Activated CD4-positive, alpha-beta T cell treated with anti-CD3 and anti-CD28 coated beads for 36 hours (primary cell): ENCODE measurements at regions of chr10 and their contacts with region 1.

Region 1: DNA sequence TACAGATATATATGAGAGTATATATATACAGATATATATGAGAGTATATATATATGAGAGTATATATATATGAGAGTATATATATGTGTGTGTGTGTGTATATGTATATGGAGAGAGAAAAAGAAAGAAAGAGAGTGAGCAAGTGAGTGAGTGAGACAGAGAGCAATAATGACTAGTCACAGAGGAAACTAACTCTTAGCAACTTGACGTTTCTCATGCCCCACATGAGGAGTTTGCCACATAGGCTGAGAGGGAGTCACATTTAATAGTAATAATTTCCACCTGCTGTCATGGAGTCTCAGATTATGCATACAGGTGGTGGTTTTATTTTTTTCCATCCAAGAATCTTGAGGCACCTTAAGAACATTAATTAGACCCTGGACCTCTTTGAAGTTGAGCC is 199.9 kb downstream of the GATA3 start:
- DNase-seq: peak; percentile 57
- ATAC-seq: peak; percentile 96
- H3K4me3 Mint-ChIP-seq: no peak overlapping the region
- H3K27ac Mint-ChIP-seq: peak overlapping the region; percentile 92
- H3K4me1 Mint-ChIP-seq: peaks cover 22% of the 10 kb centered on the region
- H3K27me3 Mint-ChIP-seq: no peaks in the 10 kb centered on the region

Region 2: DNA sequence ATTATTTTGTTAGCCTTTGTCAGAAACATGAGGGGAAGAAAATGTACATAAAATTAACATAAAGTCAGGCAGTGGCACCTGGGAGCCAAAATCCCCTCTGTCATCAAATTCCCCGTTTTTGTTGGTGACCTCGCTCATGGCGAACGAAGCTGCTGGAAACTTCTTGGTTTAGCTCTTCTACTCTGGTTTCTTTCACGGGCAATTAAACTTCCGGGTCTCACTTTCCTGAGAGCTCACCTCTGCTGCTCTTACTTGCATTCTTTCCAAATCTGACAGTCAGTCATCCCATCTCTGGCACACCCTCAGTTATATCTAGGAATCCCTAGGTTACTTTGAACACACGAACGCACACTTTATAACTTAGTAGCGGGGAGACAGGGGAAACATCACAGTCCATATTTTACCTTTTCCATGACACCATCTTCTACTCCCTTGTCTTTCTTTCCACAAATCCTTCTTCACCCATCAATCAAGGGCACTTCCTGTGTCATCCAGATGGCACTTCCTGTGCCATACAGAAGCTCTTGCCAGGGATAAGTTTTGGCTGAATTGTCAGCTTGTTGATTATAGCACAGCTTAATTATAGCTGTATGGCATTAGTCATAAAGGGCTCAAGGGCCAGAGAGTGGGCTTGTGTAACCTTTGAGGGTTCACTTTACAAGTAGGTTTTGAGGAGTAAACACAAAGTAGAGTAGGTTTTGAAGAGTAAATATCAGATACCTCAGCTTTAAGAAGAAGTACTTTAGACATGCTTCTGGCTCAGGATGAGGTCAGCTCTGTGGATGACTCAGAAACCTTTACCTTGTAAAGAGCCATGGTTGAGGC is 94.8 kb before region 1 on chr10:
- CTCF ChIA-PET with region 1: no interaction called
- POLR2A ChIA-PET with region 1: no interaction called
- intact Hi-C with region 1: no loop called
- DNase-seq: peak; percentile 14
- ATAC-seq: peak; percentile 93
- H3K4me3 Mint-ChIP-seq: no peak overlapping the region
- H3K27ac Mint-ChIP-seq: peak overlapping the region; percentile 53
- H3K4me1 Mint-ChIP-seq: peaks cover 11% of the 10 kb centered on the region
- H3K27me3 Mint-ChIP-seq: peaks cover 3% of the 10 kb centered on the region

Region 3: GRCh38 chr10:8283986-8284385 is 29.6 kb after region 1 on chr10:
- CTCF ChIA-PET with region 1: no interaction called
- POLR2A ChIA-PET with region 1: no interaction called
- intact Hi-C with region 1: no loop called
- DNase-seq: no peak
- ATAC-seq: no peak
- H3K4me3 Mint-ChIP-seq: no peak overlapping the region
- H3K27ac Mint-ChIP-seq: no peak overlapping the region
- H3K4me1 Mint-ChIP-seq: peaks cover 5% of the 10 kb centered on the region
- H3K27me3 Mint-ChIP-seq: peaks cover 3% of the 10 kb centered on the region

Region 4: DNA sequence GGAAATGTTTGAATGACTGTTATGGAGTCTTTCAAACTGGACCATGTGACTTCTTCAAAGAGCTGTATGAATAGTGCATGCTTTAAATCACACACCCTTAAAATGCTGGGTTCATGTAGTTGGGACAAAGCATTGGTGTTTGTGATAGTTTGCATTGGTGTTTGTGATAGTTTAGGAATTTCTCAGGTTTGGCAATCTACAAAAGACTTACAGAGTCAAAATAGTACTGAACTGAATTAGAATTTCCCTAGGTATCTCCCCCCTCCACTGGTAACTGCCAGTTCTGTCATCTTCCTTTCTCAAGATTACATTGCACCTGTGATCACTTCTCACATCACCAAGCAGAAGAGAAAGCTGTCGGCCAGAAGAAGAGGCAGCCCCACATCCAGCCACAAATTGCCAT is 61.3 kb after region 1 on chr10:
- CTCF ChIA-PET with region 1: no interaction called
- POLR2A ChIA-PET with region 1: no interaction called
- intact Hi-C with region 1: loop called (anchors 2 kb)
- DNase-seq: peak; percentile 44
- ATAC-seq: peak; percentile 84
- H3K4me3 Mint-ChIP-seq: no peak overlapping the region
- H3K27ac Mint-ChIP-seq: peak overlapping the region; percentile 78
- H3K4me1 Mint-ChIP-seq: peaks cover 56% of the 10 kb centered on the region
- H3K27me3 Mint-ChIP-seq: peaks cover 2% of the 10 kb centered on the region

Region 5: DNA sequence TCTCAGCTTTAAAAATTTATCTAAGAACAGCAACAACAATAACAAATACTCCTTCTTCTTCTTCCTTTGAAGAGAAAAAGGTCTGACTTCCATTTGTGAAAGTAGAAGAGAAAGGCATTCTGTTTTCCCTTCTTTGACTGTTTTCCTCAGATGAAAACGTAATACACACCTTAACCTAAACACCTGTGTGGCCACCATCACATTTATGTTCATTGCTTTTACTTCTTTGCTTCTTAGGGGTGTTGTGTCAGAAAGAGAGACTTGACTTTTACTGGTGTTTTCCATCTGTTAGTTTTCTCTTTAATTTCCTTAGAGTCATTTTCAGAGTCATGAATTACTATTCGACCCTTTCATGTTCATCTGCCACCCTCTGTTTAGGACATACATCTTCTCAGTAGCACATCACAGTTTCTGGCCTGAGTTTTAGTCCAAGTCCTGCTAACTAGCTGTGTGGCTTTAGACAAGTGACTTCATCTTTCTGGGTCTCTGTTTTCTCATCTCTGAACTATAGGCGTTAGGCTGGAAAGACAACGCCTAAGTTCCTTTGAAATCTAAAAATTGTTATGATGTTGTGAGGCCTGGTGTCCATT is 83.9 kb after region 1 on chr10:
- CTCF ChIA-PET with region 1: no interaction called
- POLR2A ChIA-PET with region 1: no interaction called
- intact Hi-C with region 1: loop called in 1 of 2 experiments (anchors 1 kb)
- DNase-seq: peak; percentile 27
- ATAC-seq: peak; percentile 96
- H3K4me3 Mint-ChIP-seq: peak overlapping the region; percentile 14
- H3K27ac Mint-ChIP-seq: peak overlapping the region; percentile 86
- H3K4me1 Mint-ChIP-seq: peaks cover 31% of the 10 kb centered on the region
- H3K27me3 Mint-ChIP-seq: no peaks in the 10 kb centered on the region

Region 6: DNA sequence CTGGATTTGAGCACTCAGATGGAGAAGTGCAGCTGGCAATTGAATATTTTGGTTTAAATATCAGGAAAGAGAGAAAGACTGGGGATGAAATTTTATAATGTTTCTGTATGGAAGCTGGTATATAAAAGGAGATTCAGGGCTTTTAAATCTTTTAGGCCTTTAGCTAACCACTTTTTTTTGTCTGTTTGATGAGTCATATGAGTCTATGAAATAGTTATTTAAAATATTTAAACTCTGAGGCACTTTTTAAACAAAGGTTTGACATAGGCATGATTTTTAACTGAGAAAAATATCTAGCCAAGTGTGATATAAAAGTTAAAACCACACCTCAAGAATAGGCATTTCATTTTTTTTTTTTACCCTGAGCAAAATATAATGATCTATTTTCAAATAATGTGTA is 744.4 kb after region 1 on chr10:
- CTCF ChIA-PET with region 1: no interaction called
- POLR2A ChIA-PET with region 1: no interaction called
- intact Hi-C with region 1: loop called in 1 of 2 experiments (anchors 10 kb)
- DNase-seq: no peak
- ATAC-seq: no peak
- H3K4me3 Mint-ChIP-seq: no peak overlapping the region
- H3K27ac Mint-ChIP-seq: no peak overlapping the region
- H3K4me1 Mint-ChIP-seq: peaks cover 31% of the 10 kb centered on the region
- H3K27me3 Mint-ChIP-seq: no peaks in the 10 kb centered on the region